ENCODE measurements at regions of chr1 and their contacts with region 1.

Region 1: DNA sequence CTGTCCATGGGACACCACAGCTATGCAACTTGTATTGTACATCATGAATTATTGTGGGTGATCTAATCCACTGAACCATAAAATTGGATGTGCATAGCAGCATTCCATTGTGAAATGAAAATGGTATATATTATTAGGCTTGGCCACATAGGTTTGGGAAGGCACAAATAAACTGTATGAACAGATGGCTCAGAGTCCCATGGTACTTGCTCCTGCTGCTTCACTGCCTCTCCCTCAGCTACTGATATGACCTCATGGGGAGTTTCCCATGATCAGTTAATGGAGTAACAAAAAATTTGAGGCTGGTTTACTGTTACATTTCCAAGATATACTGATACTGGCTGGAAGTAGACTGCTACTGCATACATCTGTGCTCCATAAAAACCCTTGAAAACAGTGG is 152.7 kb upstream of the NEGR1 start:
- DNase-seq: no peak
- ATAC-seq: no peak
- H3K4me3 ChIP-seq: no peak overlapping the region
- H3K27ac ChIP-seq: no peak overlapping the region
- H3K4me1 ChIP-seq: no peaks in the 10 kb centered on the region
- H3K27me3 ChIP-seq: no peaks in the 10 kb centered on the region
- CTCF ChIP-seq: no peak

Region 2: DNA sequence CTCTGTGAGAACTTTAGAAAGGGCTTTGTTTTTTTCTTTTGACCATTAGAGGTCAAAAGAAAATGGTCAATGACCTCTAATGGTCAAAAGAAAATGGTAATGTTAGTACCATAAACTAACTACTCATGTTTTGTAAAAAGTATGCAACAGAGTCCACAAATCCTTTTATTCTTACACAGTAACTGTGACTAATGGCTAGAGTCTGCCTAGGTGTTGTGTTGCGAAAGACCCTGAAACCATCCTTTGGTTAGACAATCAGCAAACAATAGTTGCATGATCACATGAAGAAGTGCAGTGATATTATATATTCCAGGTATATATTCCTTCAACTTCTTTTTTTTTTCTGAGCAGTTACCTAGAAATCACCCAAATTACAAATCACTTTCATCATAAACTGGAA is 193.6 kb before region 1 on chr1:
- intact Hi-C with region 1: no loop called
- DNase-seq: no peak
- ATAC-seq: no peak
- H3K4me3 ChIP-seq: no peak overlapping the region
- H3K27ac ChIP-seq: no peak overlapping the region
- H3K4me1 ChIP-seq: no peaks in the 10 kb centered on the region
- H3K27me3 ChIP-seq: no peaks in the 10 kb centered on the region
- CTCF ChIP-seq: no peak

Region 3: GRCh38 chr1:72489801-72490200 is 54.8 kb after region 1 on chr1:
- intact Hi-C with region 1: loop called in 1 of 10 experiments (anchors 2 kb)
- DNase-seq: no peak
- ATAC-seq: no peak
- H3K4me3 ChIP-seq: no peak overlapping the region
- H3K27ac ChIP-seq: no peak overlapping the region
- H3K4me1 ChIP-seq: no peaks in the 10 kb centered on the region
- H3K27me3 ChIP-seq: no peaks in the 10 kb centered on the region
- CTCF ChIP-seq: no peak

Measured in heart right ventricle (tissue), 16 donors.